Lower lobe of right lung (tissue), 2 donors: ENCODE measurements at regions of chr1 and their contacts with region 1.

Region 1: DNA sequence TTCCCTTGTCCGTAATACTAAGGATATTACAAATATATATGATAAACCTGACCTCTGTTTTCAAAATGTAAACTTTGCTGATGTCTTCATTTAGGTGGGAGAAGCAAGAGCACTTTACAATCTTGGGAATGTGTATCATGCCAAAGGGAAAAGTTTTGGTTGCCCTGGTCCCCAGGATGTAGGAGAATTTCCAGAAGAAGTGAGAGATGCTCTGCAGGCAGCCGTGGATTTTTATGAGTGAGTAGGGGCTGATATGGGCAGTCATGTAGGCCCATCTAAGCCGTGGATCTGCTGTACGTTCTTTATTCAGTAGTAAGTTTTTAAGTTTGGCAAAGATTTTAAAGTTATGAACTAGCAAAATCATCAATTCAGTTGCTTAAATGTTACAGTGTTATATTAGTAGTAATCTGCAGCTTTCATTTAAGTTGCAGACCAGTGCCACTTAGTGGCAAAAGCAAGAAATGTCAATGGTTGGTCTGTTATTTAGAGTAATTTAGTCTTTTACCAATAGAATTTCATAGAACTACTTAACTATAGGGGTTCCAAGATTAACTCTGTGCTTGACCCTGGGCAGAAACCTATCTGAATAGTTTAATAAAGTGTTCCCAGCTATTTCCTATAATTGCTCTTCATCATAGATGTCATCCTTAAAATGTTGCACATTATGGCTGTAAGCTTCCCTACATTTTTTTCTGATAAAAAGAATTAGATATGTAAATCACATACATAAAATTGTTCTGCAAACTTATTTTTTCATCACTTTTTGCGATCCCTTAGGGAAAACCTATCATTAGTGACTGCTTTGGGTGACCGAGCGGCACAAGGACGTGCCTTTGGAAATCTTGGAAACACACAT is 21.3 kb downstream of the GPSM2 start:
- DNase-seq: no peak
- ATAC-seq: peak; percentile 66 to 76
- H3K4me3 ChIP-seq: no peak overlapping the region
- H3K27ac ChIP-seq: no peak overlapping the region
- H3K4me1 ChIP-seq: peaks cover 5% of the 10 kb centered on the region
- H3K27me3 ChIP-seq: no peaks in the 10 kb centered on the region
- CTCF ChIP-seq: peak; percentile 74

Region 2: DNA sequence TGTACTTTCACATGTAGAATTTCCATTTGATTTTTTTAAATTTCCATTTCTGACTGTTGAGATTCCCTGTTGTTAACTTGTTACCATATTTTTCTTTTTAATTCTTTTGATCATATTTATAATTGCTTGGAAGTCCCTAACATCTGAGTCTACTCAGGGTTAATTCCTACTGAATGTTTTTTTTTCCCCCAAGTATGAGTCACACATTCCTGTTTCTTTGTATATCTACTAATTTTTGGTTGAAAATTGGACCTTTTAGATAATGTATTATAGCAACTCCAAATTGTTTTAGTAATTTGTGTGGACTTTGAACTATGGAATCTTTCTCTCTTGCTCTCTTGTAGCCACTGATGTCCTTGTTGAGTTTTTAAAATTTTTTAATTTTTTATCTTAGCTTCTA is 97.0 kb before region 1 on chr1:
- intact Hi-C with region 1: no loop called
- DNase-seq: no peak
- ATAC-seq: no peak
- H3K4me3 ChIP-seq: no peak overlapping the region
- H3K27ac ChIP-seq: no peak overlapping the region
- H3K4me1 ChIP-seq: no peaks in the 10 kb centered on the region
- H3K27me3 ChIP-seq: no peaks in the 10 kb centered on the region
- CTCF ChIP-seq: no peak

Region 3: DNA sequence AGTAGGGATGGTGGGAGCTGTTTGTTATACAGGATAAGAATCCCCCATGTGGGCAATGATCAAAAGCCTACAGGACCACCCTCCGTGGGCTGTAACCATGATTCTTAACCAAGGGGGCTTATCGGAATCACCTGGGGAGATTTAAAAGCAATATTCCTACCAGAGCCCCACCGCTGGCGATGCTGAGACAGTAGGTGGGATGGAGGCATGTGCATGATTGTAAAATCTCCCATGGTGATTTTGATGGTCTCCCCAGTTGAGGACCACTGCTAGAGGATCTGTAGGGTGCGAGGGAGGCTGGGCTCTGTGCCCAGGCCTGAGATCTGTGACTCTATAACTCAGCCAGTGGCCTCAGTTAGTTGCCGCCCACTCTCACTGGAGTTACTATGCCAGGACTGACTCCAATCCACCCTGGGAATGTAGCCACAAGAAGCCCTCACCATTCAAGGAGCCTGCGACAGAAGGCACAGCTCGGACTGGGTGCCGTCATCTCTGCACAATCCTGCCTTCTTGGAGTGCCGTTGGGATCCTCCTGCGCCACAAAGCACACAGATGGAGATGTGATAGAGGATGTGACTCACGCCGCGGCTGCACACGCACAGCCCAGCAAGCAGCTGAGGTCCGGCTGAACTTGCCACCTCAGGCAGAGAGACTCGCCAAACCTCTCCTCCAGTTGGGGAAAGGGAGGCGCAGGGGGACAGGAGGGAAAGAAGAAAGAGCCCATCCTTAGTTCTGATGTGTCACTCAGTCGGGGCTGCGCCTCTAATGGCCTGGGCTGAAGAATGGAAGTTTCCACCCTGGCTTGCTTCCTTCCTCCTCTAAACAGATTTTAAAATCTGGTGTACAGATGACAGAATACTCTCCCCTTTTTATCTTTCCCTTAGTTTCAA is 67.7 kb before region 1 on chr1:
- intact Hi-C with region 1: loop called (anchors 5 kb)
- DNase-seq: peak; percentile 58
- ATAC-seq: peak; percentile 73 to 84
- H3K4me3 ChIP-seq: peak overlapping the region; percentile 18
- H3K27ac ChIP-seq: peak overlapping the region; percentile 83
- H3K4me1 ChIP-seq: peaks cover 37% of the 10 kb centered on the region
- H3K27me3 ChIP-seq: no peaks in the 10 kb centered on the region
- CTCF ChIP-seq: no peak

Region 4: DNA sequence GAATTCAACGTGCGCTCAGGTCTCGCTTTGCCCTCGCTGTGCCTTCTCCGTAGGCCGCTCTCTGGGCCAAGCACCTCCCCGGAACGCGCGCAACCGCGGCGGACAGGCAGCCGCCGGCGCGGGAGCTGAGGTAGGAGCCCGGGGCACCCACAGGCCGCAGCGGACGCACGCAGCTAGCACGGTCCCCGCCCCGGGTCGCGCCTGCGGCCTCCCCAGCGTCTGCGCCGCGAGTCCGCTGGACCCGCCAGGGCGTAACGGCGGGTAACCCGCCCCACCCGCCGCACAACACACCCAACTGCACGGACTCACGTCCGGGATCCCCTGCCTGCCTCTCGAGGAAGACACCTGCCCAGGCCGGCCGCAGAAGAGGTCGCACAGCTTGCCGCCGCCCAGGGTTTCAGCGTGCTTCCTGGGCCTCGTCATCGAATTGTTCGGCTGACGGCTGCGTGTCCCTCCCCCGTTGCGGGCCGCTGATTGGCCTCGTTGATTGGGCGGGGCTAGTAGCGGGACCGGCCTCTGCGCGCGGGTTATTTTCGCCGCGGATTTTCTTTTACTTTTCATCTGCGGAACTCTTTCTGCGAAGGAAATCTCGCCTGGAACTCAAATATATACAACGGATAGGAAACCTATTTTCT is 65.1 kb after region 1 on chr1 and contains the start of gene CLCC1:
- intact Hi-C with region 1: no loop called
- DNase-seq: peak; percentile 95
- ATAC-seq: peak; percentile 98 to 99
- H3K4me3 ChIP-seq: peak within 1 kb of the TSS; percentile 89
- H3K27ac ChIP-seq: peak within 1 kb of the TSS; percentile 99
- H3K4me1 ChIP-seq: peaks cover 29% of the 10 kb centered on the region
- H3K27me3 ChIP-seq: no peaks in the 10 kb centered on the region
- CTCF ChIP-seq: no peak
- total RNA-seq, gene CLCC1: 32.1 TPM